SK-N-SH (cell line): ENCODE measurements at regions of chr17 and their contacts with region 1.

Region 1: GRCh38 chr17:57271821-57272220 is 15.5 kb downstream of the MSI2 start:
- DNase-seq: no peak
- H3K4me3 ChIP-seq: no peak overlapping the region
- H3K27ac ChIP-seq: peak overlapping the region in 1 of 2 experiments; percentile 95; a peak in 1 of 4 replicates
- H3K4me1 ChIP-seq: peaks cover 0 to 49% of the 10 kb centered on the region in 2 experiments; a peak in 2 of 4 replicates
- H3K27me3 ChIP-seq: no peaks in the 10 kb centered on the region
- CTCF ChIP-seq: no peak
- EP300 ChIP-seq: no peak
- RAD21 ChIP-seq: no peak

Region 2: DNA sequence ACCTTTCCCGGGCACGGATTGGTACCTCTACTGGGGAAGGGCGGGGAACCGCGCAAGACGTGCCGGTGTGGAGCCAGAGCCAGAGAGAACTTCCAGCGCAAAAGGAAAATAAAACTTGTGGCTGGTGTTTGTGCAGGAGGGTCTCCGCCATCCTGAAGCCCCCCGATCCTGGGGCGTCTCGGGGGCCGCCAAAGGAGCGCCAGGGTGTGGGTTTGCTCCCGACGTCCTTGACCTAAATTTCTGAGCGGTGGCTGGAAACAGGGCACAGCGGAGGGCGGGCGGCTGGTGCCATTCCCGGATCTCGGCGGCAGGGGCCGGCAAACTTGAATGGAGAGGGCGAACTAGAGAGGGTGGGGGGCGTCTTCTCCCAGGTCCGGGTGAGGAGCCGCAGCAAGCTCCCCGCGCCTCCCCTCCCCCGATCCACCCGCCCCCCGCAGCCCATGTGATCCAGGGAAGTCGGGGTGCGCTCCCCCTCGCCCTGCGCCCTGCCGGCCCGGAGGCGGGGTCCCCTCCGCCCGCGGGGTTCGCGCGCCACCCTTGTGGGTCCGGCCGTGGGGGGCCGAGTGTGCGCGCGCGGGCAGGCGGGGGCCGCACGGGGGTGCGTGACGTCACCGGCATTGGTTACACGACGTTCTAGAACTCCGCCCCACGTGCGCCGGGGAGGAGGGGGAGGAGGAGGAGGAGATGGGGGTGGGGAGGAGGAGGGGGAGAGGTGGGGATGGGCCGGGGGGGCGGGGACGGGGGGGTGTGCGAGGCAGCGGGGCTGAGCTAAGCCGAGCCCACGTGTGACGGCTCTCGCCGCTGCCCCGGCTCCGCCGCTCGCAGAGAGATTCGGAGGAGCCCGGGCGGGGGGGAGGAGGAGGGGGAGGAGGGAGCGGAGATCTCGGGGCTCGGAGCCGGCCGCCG is 15.8 kb before region 1 on chr17 and contains the start of gene MSI2:
- CTCF ChIA-PET with region 1: interaction called, 12 read pairs
- POLR2A ChIA-PET with region 1: interaction called, 13 read pairs
- DNase-seq: peak; percentile 97
- H3K4me3 ChIP-seq: peak within 1 kb of the TSS; percentile 81 to 88
- H3K27ac ChIP-seq: peak within 1 kb of the TSS; percentile 60 to 93
- H3K4me1 ChIP-seq: peaks cover 10 to 28% of the 10 kb centered on the region in 2 experiments; a peak in 3 of 4 replicates
- H3K27me3 ChIP-seq: no peaks in the 10 kb centered on the region
- CTCF ChIP-seq: peak; percentile 22
- EP300 ChIP-seq: no peak; a peak in 1 of 4 replicates
- RAD21 ChIP-seq: no peak
- polyA plus RNA-seq, gene MSI2: 24.1 and 25.5 TPM in 2 replicates

Region 3: GRCh38 chr17:57261084-57261461 is 10.7 kb before region 1 on chr17:
- CTCF ChIA-PET with region 1: interaction called, 12 read pairs
- POLR2A ChIA-PET with region 1: interaction called, 13 read pairs
- DNase-seq: no peak
- H3K4me3 ChIP-seq: no peak overlapping the region
- H3K27ac ChIP-seq: no peak overlapping the region
- H3K4me1 ChIP-seq: peaks cover 10 to 48% of the 10 kb centered on the region in 2 experiments; a peak in 3 of 4 replicates
- H3K27me3 ChIP-seq: no peaks in the 10 kb centered on the region
- CTCF ChIP-seq: no peak
- EP300 ChIP-seq: no peak
- RAD21 ChIP-seq: no peak

Region 4: GRCh38 chr17:57282296-57282695 is 10.5 kb after region 1 on chr17:
- CTCF ChIA-PET with region 1: interaction called, 26 read pairs
- POLR2A ChIA-PET with region 1: interaction called, 18 read pairs
- DNase-seq: peak; percentile 63
- H3K4me3 ChIP-seq: no peak overlapping the region
- H3K27ac ChIP-seq: peak overlapping the region in 1 of 2 experiments; percentile 71; a peak in 2 of 4 replicates
- H3K4me1 ChIP-seq: peaks cover 11 to 61% of the 10 kb centered on the region in 2 experiments; a peak in 3 of 4 replicates
- H3K27me3 ChIP-seq: no peaks in the 10 kb centered on the region
- CTCF ChIP-seq: peak; percentile 16; the same call in 1 of the 2 replicates
- EP300 ChIP-seq: no peak
- RAD21 ChIP-seq: peak; percentile 42; the same call in 1 of the 2 replicates

Region 5: DNA sequence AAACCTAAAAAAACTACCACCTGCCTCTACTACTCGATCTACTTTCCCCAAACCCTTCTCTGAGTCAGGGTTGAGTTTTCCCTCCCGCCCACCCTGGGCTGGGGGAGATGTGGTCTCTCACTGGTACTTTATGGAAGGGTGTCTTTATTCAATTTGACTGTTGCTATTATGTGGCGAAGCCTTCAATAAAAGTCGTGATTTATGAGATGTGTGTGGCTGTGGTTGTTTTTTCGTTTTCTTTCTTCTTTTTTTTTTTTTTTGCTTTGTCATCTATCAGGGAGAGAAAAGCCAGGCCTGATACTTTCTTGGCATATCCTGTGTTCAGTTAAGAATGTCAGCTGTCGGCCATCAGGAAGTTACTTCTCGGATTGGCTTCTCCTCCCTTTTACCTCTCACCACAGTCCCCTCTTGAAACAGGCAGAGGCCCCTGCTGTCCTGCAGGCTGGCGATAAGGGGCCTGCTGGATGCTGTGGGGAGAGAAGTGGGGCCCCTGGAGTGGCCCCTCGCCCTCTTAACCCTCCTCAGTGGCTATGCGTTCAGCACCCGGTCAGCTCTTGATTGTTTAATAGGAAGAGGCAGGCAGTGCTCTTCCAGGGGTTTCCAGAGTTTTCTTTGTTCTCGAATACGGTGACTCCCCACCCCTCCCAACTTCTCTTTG is 107.5 kb after region 1 on chr17:
- CTCF ChIA-PET with region 1: no interaction called
- POLR2A ChIA-PET with region 1: no interaction called
- DNase-seq: peak; percentile 67
- H3K4me3 ChIP-seq: no peak overlapping the region
- H3K27ac ChIP-seq: peak overlapping the region; percentile 32 to 65; a peak in 3 of 4 replicates
- H3K4me1 ChIP-seq: peaks cover 7 to 51% of the 10 kb centered on the region in 2 experiments
- H3K27me3 ChIP-seq: no peaks in the 10 kb centered on the region
- CTCF ChIP-seq: no peak
- EP300 ChIP-seq: peak; percentile 75 to 79; a peak in 3 of 4 replicates
- RAD21 ChIP-seq: peak; percentile 17; the same call in 1 of the 2 replicates